GM13977 (cell line): ENCODE measurements at regions of chr20 and their contacts with region 1.

Region 1: GRCh38 chr20:47620808-47621805 is 119.4 kb downstream of the NCOA3 start:
- DNase-seq: peak; percentile 27
- CTCF ChIP-seq: peak; percentile 62

Region 2: DNA sequence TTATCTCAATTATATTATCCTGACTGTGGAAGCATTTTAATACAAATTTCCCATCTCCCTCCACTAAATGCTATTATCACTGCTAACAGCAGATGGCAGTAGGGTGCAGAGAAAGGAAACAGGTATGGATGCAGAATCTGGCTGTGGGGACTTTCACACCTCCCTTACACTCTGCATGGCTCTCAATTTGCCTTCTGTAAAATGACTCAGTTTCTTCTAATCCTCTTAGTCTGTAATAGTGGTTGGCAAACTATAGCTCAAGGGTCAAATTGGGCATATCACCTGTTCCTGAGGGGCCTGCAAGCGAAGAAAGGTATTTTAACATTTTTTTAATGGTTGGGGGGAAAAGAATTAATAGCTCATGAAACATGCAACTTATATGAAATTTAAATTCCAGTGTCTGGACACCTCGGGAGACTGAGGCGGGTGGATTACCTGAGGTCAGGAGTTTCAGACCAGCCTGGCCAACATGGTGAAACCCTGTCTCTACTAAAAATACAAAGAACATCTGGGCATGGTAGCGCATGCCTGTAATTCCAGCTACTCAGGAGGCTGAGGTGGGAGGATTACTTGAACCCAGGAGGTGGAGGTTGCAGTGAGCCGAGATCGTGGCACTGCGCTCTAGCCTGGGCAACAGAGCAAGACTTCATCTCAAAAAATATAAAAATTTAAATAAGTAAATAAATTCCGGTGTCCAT is 348.1 kb before region 1 on chr20:
- in situ Hi-C with region 1: loop called (anchors 10 kb)
- DNase-seq: peak; percentile 58
- CTCF ChIP-seq: peak; percentile 80

Region 3: GRCh38 chr20:47860061-47860809 is 239.1 kb after region 1 on chr20:
- in situ Hi-C with region 1: no loop called
- DNase-seq: peak; percentile 40
- CTCF ChIP-seq: no peak

Region 4: DNA sequence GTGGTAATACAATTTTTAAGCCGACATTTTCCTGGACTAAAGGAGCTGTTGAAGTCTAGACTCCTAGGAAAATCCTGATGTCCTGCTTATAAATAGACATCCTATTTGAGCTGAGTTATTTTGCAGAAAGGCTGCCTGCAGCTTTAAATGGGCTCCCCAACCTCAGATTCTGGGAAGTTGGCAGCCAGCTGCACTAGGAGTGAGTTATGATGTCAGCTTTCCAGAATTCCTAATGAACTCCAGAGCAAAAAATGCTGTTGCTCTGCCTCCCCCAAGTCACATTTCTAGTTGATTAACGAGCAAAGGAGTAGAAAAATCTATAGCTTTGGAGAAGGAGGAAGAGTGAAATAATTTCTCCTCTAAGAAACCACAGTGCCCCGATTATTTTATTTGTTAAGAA is 510.5 kb after region 1 on chr20:
- in situ Hi-C with region 1: no loop called
- DNase-seq: no peak
- CTCF ChIP-seq: no peak